ENCODE measurements at regions of chr17 and their contacts with region 1.

Region 1: DNA sequence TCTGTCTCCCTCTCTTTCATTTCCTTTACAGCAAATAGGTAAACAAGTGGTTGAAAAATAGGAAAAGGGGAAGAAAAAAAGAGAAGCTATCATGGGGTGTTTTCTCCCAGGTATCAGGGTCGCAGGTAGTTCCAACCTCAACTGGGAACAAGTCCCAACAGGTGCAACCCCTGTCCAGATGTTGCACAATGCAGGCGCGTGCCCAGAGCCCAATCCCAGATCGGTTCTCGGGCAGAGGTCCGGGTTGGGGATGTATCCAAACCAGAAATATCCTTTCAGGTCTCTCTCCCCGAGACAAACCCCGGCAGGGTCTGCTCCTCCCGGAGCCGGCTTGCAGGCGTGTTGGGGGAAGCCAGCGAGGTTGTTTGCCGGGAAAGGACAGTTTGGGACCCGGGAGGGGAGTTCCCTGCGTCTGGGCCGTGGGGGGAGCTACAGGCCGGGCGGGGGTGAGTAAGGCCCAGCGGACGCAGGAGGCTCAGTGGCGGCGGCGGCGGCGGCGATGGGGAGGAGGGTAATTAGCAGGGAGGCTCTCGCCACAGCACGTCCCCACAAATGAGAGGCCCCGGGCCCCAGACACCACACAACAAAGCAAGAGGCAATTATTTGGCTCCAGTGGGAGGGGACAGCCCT is 21.2 kb upstream of the SP6 start:
- DNase-seq: no peak
- H3K4me3 ChIP-seq: peak overlapping the region; percentile 34 to 57 (median 47)
- H3K27ac ChIP-seq: no peak overlapping the region
- H3K4me1 ChIP-seq: peaks cover 21 to 44% (median 27%) of the 10 kb centered on the region in 4 experiments
- H3K27me3 ChIP-seq: peaks cover 3 to 25% (median 17%) of the 10 kb centered on the region in 4 experiments; a peak in 5 of 7 replicates
- CTCF ChIP-seq: no peak
- EP300 ChIP-seq: no peak
- POLR2A ChIP-seq: no peak
- RAD21 ChIP-seq: no peak

Region 2: DNA sequence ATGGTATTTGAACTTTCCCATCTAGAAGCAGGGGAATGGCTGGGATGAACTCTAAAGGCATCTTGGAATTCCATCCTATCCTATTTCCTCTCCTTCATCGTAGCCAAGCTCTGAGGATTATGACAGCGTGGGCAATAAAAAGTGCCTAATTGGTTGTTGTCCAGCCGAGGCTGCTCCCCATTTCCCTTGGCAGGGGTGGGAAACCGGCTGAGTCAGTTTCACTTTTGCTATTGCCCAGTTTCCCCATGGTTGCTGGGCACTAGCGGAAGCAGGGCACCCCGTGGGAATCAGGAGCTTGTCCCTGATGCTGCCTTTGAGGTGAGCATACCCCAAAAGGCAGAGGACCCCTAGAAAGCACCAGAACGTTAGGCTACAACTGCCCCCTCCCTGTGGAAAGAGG is 10.1 kb after region 1 on chr17:
- CTCF ChIA-PET with region 1: interaction called, 26 read pairs
- POLR2A ChIA-PET with region 1: interaction called, 17 read pairs
- DNase-seq: no peak
- H3K4me3 ChIP-seq: no peak overlapping the region
- H3K27ac ChIP-seq: no peak overlapping the region
- H3K4me1 ChIP-seq: peaks cover 0 to 20% (median 12%) of the 10 kb centered on the region in 4 experiments; a peak in 6 of 7 replicates
- H3K27me3 ChIP-seq: no peaks in the 10 kb centered on the region; a peak in 1 of 7 replicates
- CTCF ChIP-seq: no peak
- EP300 ChIP-seq: no peak
- POLR2A ChIP-seq: no peak
- RAD21 ChIP-seq: no peak

Region 3: DNA sequence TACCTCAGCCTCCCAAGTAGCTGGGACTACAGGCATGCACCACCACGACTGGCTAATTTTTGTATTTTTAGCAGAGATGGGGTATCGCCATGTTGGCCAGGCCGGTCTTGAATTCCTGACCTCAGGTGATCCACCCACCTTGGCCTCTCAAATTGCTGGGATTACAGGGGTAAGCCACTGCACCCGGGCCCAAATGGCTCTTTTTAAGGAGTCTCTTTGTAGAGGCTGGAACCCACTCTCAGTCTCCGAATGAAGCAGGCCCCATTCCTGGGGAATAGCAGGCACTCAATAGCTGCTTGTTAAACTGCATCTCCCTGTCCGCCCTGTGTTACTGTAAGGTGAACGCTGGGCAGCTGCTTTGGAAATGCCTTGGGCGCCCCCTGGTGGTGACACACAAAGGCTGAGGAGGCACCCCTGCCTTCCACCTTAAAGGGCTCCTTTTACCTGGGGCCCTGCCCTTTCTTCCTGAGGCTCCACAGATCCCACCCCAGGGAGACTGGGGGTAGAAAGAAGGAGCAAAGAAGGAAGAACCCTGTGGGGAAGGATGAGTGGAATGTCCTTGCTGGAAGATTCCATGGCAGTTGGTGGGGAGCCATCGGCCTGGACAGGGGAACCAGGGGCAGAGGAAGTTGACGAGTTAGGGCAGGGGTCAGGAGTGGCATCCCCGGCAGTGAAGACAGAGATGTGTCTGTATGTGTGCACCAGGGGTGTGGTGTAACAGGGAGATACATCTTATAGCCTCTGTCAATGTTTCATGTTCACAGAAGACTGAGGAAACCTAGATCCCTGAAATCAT is 17.8 kb after region 1 on chr17:
- CTCF ChIA-PET with region 1: interaction called, 26 read pairs
- POLR2A ChIA-PET with region 1: interaction called, 17 read pairs
- DNase-seq: peak; percentile 73 to 97
- H3K4me3 ChIP-seq: no peak overlapping the region
- H3K27ac ChIP-seq: no peak overlapping the region
- H3K4me1 ChIP-seq: peaks cover 0 to 9% (median 7%) of the 10 kb centered on the region in 4 experiments; a peak in 6 of 7 replicates
- H3K27me3 ChIP-seq: no peaks in the 10 kb centered on the region
- CTCF ChIP-seq: peak; percentile 87 to 98 (median 95)
- EP300 ChIP-seq: no peak
- POLR2A ChIP-seq: no peak
- RAD21 ChIP-seq: peak; percentile 99

Region 4: GRCh38 chr17:47915776-47916398 is 43.8 kb after region 1 on chr17:
- CTCF ChIA-PET with region 1: no interaction called
- POLR2A ChIA-PET with region 1: no interaction called
- DNase-seq: no peak
- H3K4me3 ChIP-seq: no peak overlapping the region
- H3K27ac ChIP-seq: no peak overlapping the region
- H3K4me1 ChIP-seq: no peaks in the 10 kb centered on the region
- H3K27me3 ChIP-seq: no peaks in the 10 kb centered on the region
- CTCF ChIP-seq: no peak
- EP300 ChIP-seq: no peak
- POLR2A ChIP-seq: no peak
- RAD21 ChIP-seq: no peak

Region 5: GRCh38 chr17:48002266-48002915 is 130.3 kb after region 1 on chr17:
- CTCF ChIA-PET with region 1: no interaction called
- POLR2A ChIA-PET with region 1: no interaction called
- DNase-seq: no peak
- H3K4me3 ChIP-seq: peak overlapping the region in 1 of 4 experiments; percentile 12; a peak in 3 of 8 replicates
- H3K27ac ChIP-seq: peak overlapping the region; percentile 68
- H3K4me1 ChIP-seq: peaks cover 18 to 41% (median 28%) of the 10 kb centered on the region in 4 experiments
- H3K27me3 ChIP-seq: no peaks in the 10 kb centered on the region
- CTCF ChIP-seq: no peak
- EP300 ChIP-seq: no peak
- POLR2A ChIP-seq: no peak
- RAD21 ChIP-seq: no peak